ENCODE measurements at regions of chr5 and their contacts with region 1.

Region 1: GRCh38 chr5:51810592-51810991 is 427.3 kb downstream of the ISL1 start:
- DNase-seq: peak; percentile 60
- H3K4me3 ChIP-seq: no peak overlapping the region
- H3K27ac ChIP-seq: no peak overlapping the region
- H3K4me1 ChIP-seq: peaks cover 6% of the 10 kb centered on the region
- H3K27me3 ChIP-seq: no peaks in the 10 kb centered on the region
- CTCF ChIP-seq: no peak
- POLR2A ChIP-seq: no peak

Region 2: DNA sequence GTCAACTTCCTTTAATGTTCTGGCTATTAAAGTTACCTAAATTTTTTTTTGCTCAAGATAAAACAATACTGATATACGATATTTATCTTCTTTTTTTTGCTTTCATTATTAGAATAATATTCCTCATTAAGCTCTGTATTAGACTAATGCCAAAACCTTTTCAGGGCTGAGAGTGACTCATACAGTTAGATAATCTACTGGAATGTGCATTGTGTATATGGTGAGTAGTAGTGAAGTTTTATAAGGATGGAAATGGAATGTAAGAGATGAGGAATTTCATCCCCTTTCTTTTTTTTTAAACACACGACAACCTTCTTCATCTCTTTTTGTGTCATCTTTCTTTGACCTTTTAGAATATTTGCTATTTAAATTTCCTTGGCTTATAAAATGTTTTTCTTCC is 158.7 kb before region 1 on chr5:
- CTCF ChIA-PET with region 1: no interaction called
- POLR2A ChIA-PET with region 1: no interaction called
- dilution Hi-C with region 1: no loop called
- intact Hi-C with region 1: loop called (anchors 5 kb)
- DNase-seq: peak; percentile 77
- H3K4me3 ChIP-seq: peak overlapping the region in 1 of 3 experiments; percentile 7
- H3K27ac ChIP-seq: peak overlapping the region; percentile 51
- H3K4me1 ChIP-seq: peaks cover 31% of the 10 kb centered on the region
- H3K27me3 ChIP-seq: no peaks in the 10 kb centered on the region
- CTCF ChIP-seq: no peak
- POLR2A ChIP-seq: no peak

Region 3: DNA sequence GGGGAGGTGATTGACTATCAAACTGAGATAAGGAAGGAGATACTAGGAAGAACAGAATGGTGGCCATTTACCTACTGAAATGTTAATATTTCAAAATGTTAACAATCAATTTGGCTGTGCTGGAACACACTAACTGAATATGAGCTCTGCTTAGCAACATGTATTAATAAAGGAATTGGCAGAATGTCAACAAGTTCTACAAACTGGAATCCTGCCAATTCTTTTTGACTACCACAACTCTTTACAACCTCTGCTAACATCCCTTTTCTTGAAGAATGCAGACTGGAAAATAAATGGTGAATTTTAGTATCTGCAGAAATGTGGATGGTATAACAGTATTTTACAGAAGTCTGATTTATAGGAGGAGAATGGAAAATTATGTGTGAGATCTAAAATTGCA is 19.1 kb after region 1 on chr5:
- CTCF ChIA-PET with region 1: no interaction called
- POLR2A ChIA-PET with region 1: no interaction called
- dilution Hi-C with region 1: no loop called
- intact Hi-C with region 1: loop called (anchors 2 kb)
- DNase-seq: peak; percentile 87
- H3K4me3 ChIP-seq: no peak overlapping the region
- H3K27ac ChIP-seq: no peak overlapping the region
- H3K4me1 ChIP-seq: peaks cover 15% of the 10 kb centered on the region
- H3K27me3 ChIP-seq: no peaks in the 10 kb centered on the region
- CTCF ChIP-seq: no peak
- POLR2A ChIP-seq: no peak

Region 4: GRCh38 chr5:52814749-52815148 is 1004.2 kb after region 1 on chr5:
- CTCF ChIA-PET with region 1: no interaction called
- POLR2A ChIA-PET with region 1: no interaction called
- dilution Hi-C with region 1: no loop called
- intact Hi-C with region 1: no loop called
- DNase-seq: peak; percentile 62
- H3K4me3 ChIP-seq: no peak overlapping the region
- H3K27ac ChIP-seq: no peak overlapping the region
- H3K4me1 ChIP-seq: peaks cover 12% of the 10 kb centered on the region
- H3K27me3 ChIP-seq: no peaks in the 10 kb centered on the region
- CTCF ChIP-seq: no peak
- POLR2A ChIP-seq: no peak